PC-3 (cell line): ENCODE measurements at regions of chr7 and their contacts with region 1.

Region 1: GRCh38 chr7:32586291-32587221 is 91.3 kb downstream of the AVL9 start:
- DNase-seq: peak; percentile 18
- ATAC-seq: 0 out of 2 replicates have a peak, but pooled peaks have one; percentile 23
- H3K4me3 ChIP-seq: no peak overlapping the region
- H3K27ac ChIP-seq: no peak overlapping the region
- H3K4me1 ChIP-seq: peaks cover 20% of the 10 kb centered on the region
- H3K27me3 ChIP-seq: no peaks in the 10 kb centered on the region
- CTCF ChIP-seq: no peak

Region 2: GRCh38 chr7:32658034-32658944 is 71.7 kb after region 1 on chr7:
- CTCF ChIA-PET with region 1: no interaction called
- POLR2A ChIA-PET with region 1: no interaction called
- intact Hi-C with region 1: loop called (anchors 2 kb)
- DNase-seq: peak; percentile 90
- ATAC-seq: peak; percentile 99
- H3K4me3 ChIP-seq: peak overlapping the region; percentile 23; the same call in 1 of the 2 replicates
- H3K27ac ChIP-seq: peak overlapping the region; percentile 97
- H3K4me1 ChIP-seq: peaks cover 19% of the 10 kb centered on the region
- H3K27me3 ChIP-seq: no peaks in the 10 kb centered on the region
- CTCF ChIP-seq: no peak

Region 3: GRCh38 chr7:32858648-32859047 is 272.1 kb after region 1 on chr7:
- CTCF ChIA-PET with region 1: no interaction called
- POLR2A ChIA-PET with region 1: no interaction called
- intact Hi-C with region 1: no loop called
- DNase-seq: no peak
- ATAC-seq: no peak
- H3K4me3 ChIP-seq: no peak overlapping the region
- H3K27ac ChIP-seq: no peak overlapping the region
- H3K4me1 ChIP-seq: no peaks in the 10 kb centered on the region
- H3K27me3 ChIP-seq: no peaks in the 10 kb centered on the region
- CTCF ChIP-seq: no peak